Head of caudate nucleus (tissue), 42 donors: ENCODE measurements at regions of chr20 and their contacts with region 1.

Region 1: GRCh38 chr20:37265152-37265551 is 3.5 kb upstream of the GHRH start:
- DNase-seq: no peak

Region 2: DNA sequence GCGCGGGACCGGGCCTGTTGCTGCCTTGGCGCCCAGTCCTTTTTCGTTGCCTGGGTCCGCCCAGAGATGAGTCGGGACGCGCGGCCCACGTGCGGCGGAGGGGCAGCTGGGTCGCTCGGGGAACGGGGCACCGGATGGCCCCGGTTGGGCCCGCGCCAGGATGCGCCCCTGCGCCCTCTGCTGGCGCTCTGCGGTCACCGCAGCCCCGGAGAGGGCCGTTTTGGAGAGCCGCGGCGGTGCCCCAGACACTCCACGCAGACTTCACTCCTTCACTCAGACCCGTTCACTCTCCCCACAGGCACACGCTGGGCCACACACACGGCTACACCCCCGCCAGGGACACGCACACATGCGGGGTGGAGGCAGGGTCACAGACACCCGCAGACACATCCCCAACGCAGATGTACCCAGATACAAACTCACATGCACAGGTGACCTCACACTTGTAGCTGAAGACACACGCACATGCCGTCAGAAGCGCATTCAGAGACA is 119.6 kb after region 1 on chr20:
- intact Hi-C with region 1: loop called (anchors 5 kb)
- DNase-seq: peak in 36 of 42 donors; percentile 20 to 82 (median 64)

Region 3: DNA sequence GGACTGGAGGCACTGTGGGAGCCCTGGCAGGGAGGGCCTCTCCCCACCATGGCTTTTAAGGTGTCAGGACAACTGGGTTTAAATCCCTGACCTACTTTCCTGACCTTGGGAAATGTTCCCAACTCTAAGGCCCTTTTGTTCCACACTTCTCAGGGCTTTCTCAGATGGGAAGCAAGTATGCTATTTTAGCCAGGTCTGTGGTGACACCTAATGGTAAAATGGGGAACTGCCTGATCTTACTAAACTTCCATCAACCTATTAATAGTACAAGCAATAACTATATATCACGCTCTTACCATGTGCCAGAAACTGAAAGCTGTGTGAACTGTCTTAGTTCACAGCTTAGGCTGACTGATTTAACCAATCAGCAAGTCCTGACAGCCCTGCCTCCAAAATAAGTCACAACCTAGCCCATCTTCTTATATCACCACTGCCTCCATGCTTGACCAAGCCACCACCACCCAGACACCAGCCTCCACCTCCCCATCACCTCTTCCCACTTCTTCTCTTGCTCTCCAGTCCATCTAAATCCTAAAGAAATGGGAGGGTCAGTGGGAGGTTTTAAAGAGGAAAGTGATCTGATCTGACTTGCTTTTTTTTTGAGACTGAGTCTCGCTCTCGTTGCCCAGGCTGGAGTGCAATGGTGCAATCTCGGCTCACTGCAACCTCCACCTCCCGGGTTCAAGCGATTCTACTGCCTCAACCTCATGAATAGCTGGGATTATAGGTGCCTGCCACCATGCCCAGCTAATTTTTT is 269.4 kb after region 1 on chr20:
- intact Hi-C with region 1: loop called (anchors 5 kb)
- DNase-seq: peak in 26 of 42 donors; percentile 11 to 87 (median 69)